Activated naive CD4-positive, alpha-beta T cell treated with anti-CD3 and anti-CD28 coated beads for 36 hours (primary cell): ENCODE measurements at regions of chr17 and their contacts with region 1.

Region 1: GRCh38 chr17:43766413-43767052 is 7.9 kb upstream of the SOST start:
- DNase-seq: peak; percentile 67
- H3K4me3 Mint-ChIP-seq: no peak overlapping the region
- H3K27ac Mint-ChIP-seq: no peak overlapping the region
- H3K4me1 Mint-ChIP-seq: no peaks in the 10 kb centered on the region
- H3K27me3 Mint-ChIP-seq: no peaks in the 10 kb centered on the region

Region 2: GRCh38 chr17:43467981-43468581 is 298.5 kb before region 1 on chr17:
- CTCF ChIA-PET with region 1: no interaction called
- intact Hi-C with region 1: no loop called
- DNase-seq: no peak
- H3K4me3 Mint-ChIP-seq: no peak overlapping the region
- H3K27ac Mint-ChIP-seq: no peak overlapping the region
- H3K4me1 Mint-ChIP-seq: no peaks in the 10 kb centered on the region
- H3K27me3 Mint-ChIP-seq: peaks cover 4% of the 10 kb centered on the region

Region 3: DNA sequence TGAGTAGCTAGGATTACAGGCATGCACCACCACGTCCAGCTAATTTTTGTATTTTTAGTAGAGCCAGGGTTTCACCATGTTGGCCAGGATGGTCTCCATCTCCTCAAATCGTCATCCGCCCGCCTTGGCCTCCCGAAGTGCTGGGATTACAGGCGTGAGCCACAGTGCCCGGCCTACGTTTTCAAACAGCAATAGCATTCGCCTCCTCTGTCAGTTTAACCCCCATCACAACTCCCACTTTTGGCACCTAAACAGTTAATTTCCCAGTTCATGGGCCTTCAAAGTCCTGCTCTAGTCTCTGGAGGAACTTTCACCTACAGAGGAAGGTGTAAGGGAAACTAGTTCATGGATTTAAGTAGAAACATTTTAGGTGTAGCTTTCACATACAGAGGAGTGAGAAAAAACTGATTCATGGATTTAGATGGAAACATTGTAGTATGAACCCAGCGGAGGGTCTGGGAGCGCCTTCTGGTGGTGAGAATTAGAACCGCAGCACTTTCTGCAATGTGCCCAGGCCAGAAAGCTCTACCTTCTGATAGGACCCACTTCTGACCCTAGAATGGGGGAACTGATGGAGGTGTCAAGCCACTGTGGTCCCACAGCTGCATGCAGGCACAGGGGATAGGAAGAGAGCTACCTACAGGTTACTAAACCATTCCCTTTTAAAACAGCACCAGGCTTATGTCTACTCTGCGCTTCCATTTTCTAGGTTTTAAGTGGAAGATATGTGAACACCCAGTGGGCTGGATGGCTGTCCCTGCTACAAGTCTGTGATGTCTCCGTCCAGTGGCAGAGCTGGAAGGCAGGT is 92.8 kb before region 1 on chr17:
- CTCF ChIA-PET with region 1: interaction called, 13 read pairs
- intact Hi-C with region 1: no loop called
- DNase-seq: peak; percentile 87
- H3K4me3 Mint-ChIP-seq: no peak overlapping the region
- H3K27ac Mint-ChIP-seq: no peak overlapping the region
- H3K4me1 Mint-ChIP-seq: peaks cover 19% of the 10 kb centered on the region
- H3K27me3 Mint-ChIP-seq: no peaks in the 10 kb centered on the region

Region 4: GRCh38 chr17:43694077-43694870 is 72.3 kb before region 1 on chr17:
- CTCF ChIA-PET with region 1: interaction called, 403 read pairs
- intact Hi-C with region 1: no loop called
- DNase-seq: peak; percentile 87
- H3K4me3 Mint-ChIP-seq: no peak overlapping the region
- H3K27ac Mint-ChIP-seq: no peak overlapping the region
- H3K4me1 Mint-ChIP-seq: no peaks in the 10 kb centered on the region
- H3K27me3 Mint-ChIP-seq: no peaks in the 10 kb centered on the region

Region 5: DNA sequence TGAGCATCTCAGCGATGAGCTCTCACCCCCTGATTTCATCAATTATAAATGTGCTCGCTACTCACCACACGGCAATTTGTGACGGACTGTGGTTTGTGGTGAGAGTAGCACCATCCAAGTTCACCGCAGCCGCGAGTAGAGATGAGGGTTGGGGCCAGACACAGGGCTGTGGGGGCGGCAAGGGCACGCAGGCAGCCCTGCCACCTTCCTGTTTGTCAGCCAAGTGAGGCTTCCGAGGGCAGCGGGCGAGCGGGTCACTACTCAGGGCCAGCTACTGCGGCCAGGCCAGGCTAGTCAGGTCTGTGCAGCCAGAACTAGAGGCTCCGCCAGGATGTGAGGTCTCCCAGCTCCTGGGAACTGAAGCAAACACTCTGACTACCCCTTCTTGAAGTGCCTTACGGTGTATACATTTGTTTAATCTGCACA is 65.2 kb before region 1 on chr17:
- CTCF ChIA-PET with region 1: interaction called, 403 read pairs
- intact Hi-C with region 1: no loop called
- DNase-seq: peak; percentile 44
- H3K4me3 Mint-ChIP-seq: no peak overlapping the region
- H3K27ac Mint-ChIP-seq: no peak overlapping the region
- H3K4me1 Mint-ChIP-seq: peaks cover 5% of the 10 kb centered on the region
- H3K27me3 Mint-ChIP-seq: peaks cover 7% of the 10 kb centered on the region

Region 6: DNA sequence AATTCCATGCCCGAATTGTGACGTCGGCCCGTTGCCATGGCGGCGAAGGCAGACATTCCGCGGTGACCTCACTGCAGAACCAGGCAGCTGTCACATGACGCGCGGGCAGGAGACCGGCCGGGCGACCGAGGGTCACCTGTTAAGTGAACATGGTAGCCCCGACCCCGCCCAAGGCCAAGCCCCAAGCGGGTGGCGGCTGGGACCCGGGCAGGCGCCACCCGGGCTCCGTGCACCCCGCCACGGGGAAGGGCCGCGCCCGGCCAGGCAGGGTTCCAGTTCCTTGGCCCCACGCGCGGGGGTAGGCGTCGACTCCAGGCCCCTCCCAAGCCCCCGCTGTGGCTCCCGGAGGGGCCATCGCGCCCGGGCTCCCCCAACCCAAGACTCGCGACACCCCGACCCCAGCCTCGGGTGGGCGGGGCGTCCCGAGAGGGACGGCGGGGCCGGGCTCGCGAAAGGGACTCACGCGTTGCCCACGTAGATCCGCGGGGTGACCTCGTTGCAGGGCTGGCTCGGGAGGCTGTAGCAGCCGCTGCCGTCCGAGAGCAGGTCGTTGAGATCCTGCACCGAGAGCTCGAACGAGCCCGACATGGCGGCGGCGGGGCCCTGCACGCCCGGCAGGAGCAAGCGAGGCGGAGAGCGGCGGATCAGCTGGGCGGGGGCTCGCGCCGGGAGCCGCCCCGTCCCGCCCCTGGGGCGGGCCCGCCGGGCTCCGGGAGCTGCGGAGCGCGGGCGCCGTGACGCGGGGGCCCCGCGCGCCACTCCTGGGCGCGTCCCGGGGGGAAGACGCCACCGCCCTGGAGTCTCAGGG is 12.0 kb after region 1 on chr17 and contains the start of gene DUSP3:
- CTCF ChIA-PET with region 1: interaction called, 15 read pairs
- intact Hi-C with region 1: no loop called
- DNase-seq: peak; percentile 70
- H3K4me3 Mint-ChIP-seq: peak within 1 kb of the TSS; percentile 78
- H3K27ac Mint-ChIP-seq: no peak within 1 kb of the TSS
- H3K4me1 Mint-ChIP-seq: peaks cover 9% of the 10 kb centered on the region
- H3K27me3 Mint-ChIP-seq: peaks cover 13% of the 10 kb centered on the region
- total RNA-seq, gene DUSP3: 12.2 to 13.5 TPM

Region 7: DNA sequence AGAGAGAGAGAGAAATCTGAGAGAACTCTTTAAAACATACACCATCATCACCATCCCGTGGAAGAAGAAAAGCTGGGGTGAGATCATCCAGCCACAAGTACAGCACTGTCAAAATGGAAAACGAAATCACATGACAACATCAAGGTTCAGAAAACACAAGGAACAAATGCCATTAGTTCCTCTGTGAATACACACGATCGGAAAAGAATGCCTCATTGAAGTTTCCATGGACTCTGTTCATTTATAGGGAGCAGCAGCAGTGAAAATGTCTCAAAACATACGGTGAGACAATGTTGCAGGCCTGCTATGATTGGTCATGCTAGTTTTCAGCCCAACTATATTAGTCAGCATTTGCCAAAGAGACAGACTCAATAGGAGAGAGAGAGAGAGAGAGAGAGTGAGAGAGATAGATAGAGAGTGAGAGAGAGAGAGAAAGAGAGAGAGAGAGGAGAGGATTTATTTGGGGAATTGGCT is 18.1 kb after region 1 on chr17:
- CTCF ChIA-PET with region 1: interaction called, 10 read pairs
- intact Hi-C with region 1: no loop called
- DNase-seq: no peak
- H3K4me3 Mint-ChIP-seq: no peak overlapping the region
- H3K27ac Mint-ChIP-seq: no peak overlapping the region
- H3K4me1 Mint-ChIP-seq: no peaks in the 10 kb centered on the region
- H3K27me3 Mint-ChIP-seq: peaks cover 13% of the 10 kb centered on the region